Heart left ventricle (tissue), 16 donors: ENCODE measurements at regions of chr3 and their contacts with region 1.

Region 1: DNA sequence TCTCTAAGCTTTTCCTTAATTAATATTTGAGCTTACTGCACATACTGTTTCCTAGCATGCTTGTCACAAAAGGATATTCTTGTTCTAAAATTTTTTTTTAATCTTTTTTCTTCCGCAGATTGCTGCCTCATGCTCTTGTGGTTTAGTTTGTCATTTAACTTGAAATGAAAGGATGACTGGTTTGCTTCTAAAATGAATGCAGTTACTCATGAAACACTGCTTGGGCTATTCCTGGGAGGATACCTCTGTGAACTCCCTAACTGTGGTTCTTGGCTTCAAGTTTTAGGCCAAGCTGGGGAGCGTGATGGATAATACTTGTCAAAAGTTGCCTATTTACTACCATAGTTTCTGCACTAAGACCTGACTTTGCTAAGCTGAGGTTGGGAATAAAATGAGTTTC is 64.0 kb downstream of the USP13 start:
- DNase-seq: no peak
- ATAC-seq: peak in 1 of 4 donors; percentile 37
- H3K4me3 ChIP-seq: no peak overlapping the region
- H3K27ac ChIP-seq: peak overlapping the region in 9 of 12 donors; percentile 1 to 57 (median 44)
- H3K4me1 ChIP-seq: peaks cover 0 to 33% (median 8%) of the 10 kb centered on the region in 12 donors
- H3K27me3 ChIP-seq: no peaks in the 10 kb centered on the region
- CTCF ChIP-seq: no peak
- POLR2A ChIP-seq: no peak

Region 2: DNA sequence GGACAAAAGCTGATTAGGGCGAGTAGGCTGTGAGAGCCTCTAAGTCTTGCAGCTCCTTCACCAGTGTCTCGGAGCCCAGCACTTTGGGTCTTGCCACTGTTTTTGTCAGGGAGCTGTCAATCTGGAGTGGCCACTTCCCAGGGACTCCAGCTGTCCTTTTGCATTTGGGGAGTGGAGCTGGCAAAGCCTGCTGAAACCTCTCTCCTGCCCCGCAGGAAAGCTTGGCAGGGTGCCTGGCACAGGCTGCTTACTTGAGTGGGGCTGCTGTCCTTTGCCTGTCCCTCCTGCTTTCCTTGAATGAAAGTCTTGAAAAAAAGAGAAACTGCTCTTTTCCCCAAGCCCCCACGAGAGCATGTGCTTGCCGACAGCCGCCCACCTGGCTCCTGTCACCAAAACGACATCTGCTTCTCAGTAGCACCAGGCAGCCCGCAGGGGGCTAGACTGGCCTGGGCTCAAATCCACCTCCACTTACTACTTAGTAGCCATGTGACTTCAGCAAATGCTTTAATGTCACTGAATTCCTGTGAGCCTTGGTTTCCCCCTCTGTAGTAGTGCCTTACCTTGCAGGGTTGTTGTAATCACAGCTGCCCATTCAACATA is 50.3 kb before region 1 on chr3:
- intact Hi-C with region 1: loop called in 1 of 10 experiments (anchors 5 kb)
- DNase-seq: peak; percentile 74 to 91 (median 86)
- ATAC-seq: peak; percentile 76 to 85 (median 80)
- H3K4me3 ChIP-seq: peak overlapping the region in 3 of 12 donors; percentile 8 to 18 (median 16)
- H3K27ac ChIP-seq: peak overlapping the region; percentile 23 to 81 (median 68)
- H3K4me1 ChIP-seq: peaks cover 0 to 90% (median 36%) of the 10 kb centered on the region in 12 donors
- H3K27me3 ChIP-seq: no peaks in the 10 kb centered on the region
- CTCF ChIP-seq: no peak
- POLR2A ChIP-seq: no peak

Region 3: DNA sequence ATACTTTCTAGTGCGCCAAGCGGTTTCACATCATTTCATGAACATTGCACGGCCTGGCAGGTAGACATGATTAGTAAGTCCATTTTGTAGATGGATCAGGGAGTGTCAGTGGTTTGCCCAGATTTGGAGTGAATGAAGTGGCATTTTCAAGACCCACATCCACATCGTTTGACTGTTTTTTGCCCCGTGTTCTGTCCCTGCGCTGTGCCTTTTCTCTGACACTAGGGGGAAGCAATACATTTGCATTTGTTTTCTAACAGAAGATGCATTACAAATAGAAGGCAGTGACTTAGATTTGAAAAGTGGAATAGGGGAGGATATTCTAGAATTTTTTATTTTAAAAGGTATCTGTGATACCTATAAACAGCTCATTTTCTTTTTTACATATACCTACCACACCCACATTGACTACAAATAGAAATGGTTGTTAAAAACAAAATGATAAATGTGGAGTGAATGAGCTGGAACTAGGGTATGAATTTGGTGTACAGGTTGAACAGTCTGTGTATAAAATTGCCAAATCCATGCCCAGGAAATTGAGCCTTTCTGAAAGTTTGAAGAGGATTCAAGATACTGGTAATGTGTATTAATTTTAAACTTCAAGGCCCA is 34.0 kb after region 1 on chr3:
- intact Hi-C with region 1: no loop called
- DNase-seq: no peak
- ATAC-seq: no peak
- H3K4me3 ChIP-seq: no peak overlapping the region
- H3K27ac ChIP-seq: no peak overlapping the region
- H3K4me1 ChIP-seq: peaks cover 0 to 2% (median 0%) of the 10 kb centered on the region in 12 donors
- H3K27me3 ChIP-seq: no peaks in the 10 kb centered on the region
- CTCF ChIP-seq: peak in 11 of 12 donors; percentile 19 to 50 (median 29)
- POLR2A ChIP-seq: no peak